ENCODE measurements at regions of chr12 and their contacts with region 1.

Region 1: GRCh38 chr12:12081836-12082497 is 11.2 kb downstream of the BCL2L14 start:
- DNase-seq: peak; percentile 70
- ATAC-seq: peak; percentile 94
- H3K4me3 ChIP-seq: peak overlapping the region; percentile 30 to 49 (median 38)
- H3K27ac ChIP-seq: peak overlapping the region; percentile 49
- H3K4me1 ChIP-seq: peaks cover 37% of the 10 kb centered on the region
- H3K27me3 ChIP-seq: no peaks in the 10 kb centered on the region; a peak in 2 of 5 replicates
- CTCF ChIP-seq: peak; percentile 78
- EP300 ChIP-seq: no peak
- POLR2A ChIP-seq: no peak
- RAD21 ChIP-seq: peak; percentile 50

Region 2: DNA sequence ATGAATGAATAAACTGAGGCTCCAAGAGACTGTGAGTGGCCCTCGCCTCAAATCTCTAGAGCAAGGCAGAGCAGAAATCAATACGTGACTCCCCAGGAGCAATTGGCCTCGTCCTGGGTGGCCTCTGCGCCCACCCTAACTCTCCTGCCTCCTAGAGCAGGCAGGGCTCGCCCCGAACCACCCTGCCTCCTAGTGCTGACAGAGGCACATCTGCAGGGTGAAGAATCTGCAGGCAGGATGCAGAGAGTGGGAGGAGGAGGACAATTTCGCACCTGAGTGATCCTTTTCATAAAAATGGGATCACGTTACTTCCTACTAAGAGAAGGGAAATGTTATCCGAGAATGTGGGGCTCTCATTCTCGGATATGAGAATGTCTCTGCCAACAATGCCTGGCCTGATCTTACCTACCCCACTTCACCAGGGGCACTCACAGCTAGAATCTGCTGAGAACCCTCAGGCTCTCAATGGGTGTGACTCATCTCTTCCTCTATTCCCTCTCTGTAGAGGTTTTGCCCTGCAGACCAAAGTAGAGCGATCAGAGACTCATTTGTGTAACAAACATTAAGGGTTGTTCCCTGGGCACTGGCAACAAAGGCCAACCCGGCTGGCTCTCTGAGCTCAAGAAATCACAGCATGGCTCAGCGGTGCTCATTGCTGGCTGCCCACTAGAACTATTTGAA is 72.9 kb before region 1 on chr12:
- CTCF ChIA-PET with region 1: no interaction called
- POLR2A ChIA-PET with region 1: no interaction called
- in situ Hi-C with region 1: no loop called
- intact Hi-C with region 1: no loop called
- DNase-seq: no peak
- ATAC-seq: peak; percentile 66
- H3K4me3 ChIP-seq: no peak overlapping the region
- H3K27ac ChIP-seq: no peak overlapping the region
- H3K4me1 ChIP-seq: no peaks in the 10 kb centered on the region
- H3K27me3 ChIP-seq: peaks cover 4 to 28% of the 10 kb centered on the region in 2 experiments; a peak in 3 of 5 replicates
- CTCF ChIP-seq: no peak
- EP300 ChIP-seq: no peak
- POLR2A ChIP-seq: no peak
- RAD21 ChIP-seq: no peak

Region 3: GRCh38 chr12:12266873-12267741 is 185.1 kb after region 1 on chr12 and contains the start of gene LRP6:
- CTCF ChIA-PET with region 1: no interaction called
- POLR2A ChIA-PET with region 1: no interaction called
- in situ Hi-C with region 1: no loop called
- intact Hi-C with region 1: loop called (anchors 5 kb)
- DNase-seq: peak; percentile 80
- ATAC-seq: peak; percentile 94
- H3K4me3 ChIP-seq: peak within 1 kb of the TSS; percentile 90 to 95 (median 93)
- H3K27ac ChIP-seq: peak within 1 kb of the TSS; percentile 100
- H3K4me1 ChIP-seq: peaks cover 33% of the 10 kb centered on the region
- H3K27me3 ChIP-seq: no peaks in the 10 kb centered on the region; a peak in 1 of 5 replicates
- CTCF ChIP-seq: peak; percentile 31; the same call in 1 of the 2 replicates
- EP300 ChIP-seq: no peak
- POLR2A ChIP-seq: peak; percentile 69 to 72
- RAD21 ChIP-seq: 0 out of 2 replicates have a peak, but pooled peaks have one; percentile 20
- total RNA-seq, gene LRP6: 31.7 and 42.0 TPM in 2 replicates

Region 4: DNA sequence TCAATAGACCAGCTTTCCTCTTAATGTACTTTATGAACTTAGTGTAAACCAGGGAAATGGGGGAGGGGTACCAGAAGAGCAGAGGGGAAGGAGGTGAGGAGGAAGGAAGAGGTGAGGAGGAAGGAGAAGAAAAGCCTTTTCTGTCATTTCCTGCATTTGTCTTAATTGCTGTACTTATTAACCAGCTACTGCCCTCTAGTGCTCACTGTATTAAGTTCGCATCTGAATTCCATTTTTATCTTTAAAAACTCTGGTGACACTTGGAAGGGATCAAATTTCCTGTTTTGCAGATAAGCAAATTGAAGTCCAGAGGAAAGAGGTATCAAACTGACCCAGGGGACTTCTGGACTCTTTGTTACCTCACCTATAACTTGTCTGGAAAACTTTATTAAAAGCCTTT is 245.8 kb after region 1 on chr12:
- CTCF ChIA-PET with region 1: interaction called, 4 read pairs
- POLR2A ChIA-PET with region 1: interaction called, 4 read pairs
- in situ Hi-C with region 1: loop called (anchors 5 kb)
- intact Hi-C with region 1: loop called (anchors 2 kb)
- DNase-seq: peak; percentile 65
- ATAC-seq: peak; percentile 35; the same call in 1 of the 3 replicates
- H3K4me3 ChIP-seq: no peak overlapping the region
- H3K27ac ChIP-seq: no peak overlapping the region
- H3K4me1 ChIP-seq: peaks cover 9% of the 10 kb centered on the region
- H3K27me3 ChIP-seq: no peaks in the 10 kb centered on the region
- CTCF ChIP-seq: peak; percentile 80
- EP300 ChIP-seq: no peak
- POLR2A ChIP-seq: no peak
- RAD21 ChIP-seq: peak; percentile 73

Region 5: DNA sequence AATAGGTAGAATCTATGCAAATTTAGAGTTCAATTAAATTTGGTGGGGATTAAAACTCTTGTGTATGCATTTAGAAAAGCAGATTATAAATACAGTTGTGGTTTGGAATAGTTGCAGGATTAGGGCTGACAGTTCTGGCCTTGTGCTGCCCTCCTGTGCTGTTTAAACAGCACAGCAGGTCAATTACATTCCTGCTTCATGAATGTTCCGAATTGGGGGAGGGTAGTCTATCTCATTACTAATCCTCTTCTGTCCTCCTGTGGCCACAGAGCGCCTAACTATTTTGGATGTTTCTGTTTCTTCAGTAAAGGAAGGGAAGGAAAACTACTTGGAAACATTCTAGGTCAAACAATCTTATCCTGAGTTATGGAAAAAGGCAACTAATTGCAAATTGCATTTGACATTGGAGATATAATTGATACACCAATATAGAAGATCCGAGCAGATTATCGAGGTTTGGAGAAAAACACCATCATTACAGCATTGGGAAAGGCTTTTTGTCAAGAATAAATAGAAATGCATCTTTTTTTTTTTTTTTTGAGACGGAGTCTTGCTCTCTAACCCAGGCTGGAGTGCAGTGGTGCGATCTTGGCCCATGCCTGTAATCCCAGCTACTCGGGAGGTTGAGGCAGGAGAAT is 622.7 kb after region 1 on chr12:
- CTCF ChIA-PET with region 1: no interaction called
- POLR2A ChIA-PET with region 1: no interaction called
- in situ Hi-C with region 1: loop called (anchors 25 kb)
- intact Hi-C with region 1: loop called (anchors 1 kb)
- DNase-seq: peak; percentile 92
- ATAC-seq: peak; percentile 99
- H3K4me3 ChIP-seq: peak overlapping the region in 1 of 3 experiments; percentile 6; a peak in 1 of 6 replicates
- H3K27ac ChIP-seq: no peak overlapping the region
- H3K4me1 ChIP-seq: peaks cover 25% of the 10 kb centered on the region
- H3K27me3 ChIP-seq: no peaks in the 10 kb centered on the region; a peak in 1 of 5 replicates
- CTCF ChIP-seq: peak; percentile 92
- EP300 ChIP-seq: no peak; a peak in 1 of 4 replicates
- POLR2A ChIP-seq: no peak
- RAD21 ChIP-seq: peak; percentile 98